Activated naive CD4-positive, alpha-beta T cell treated with anti-CD3 and anti-CD28 coated beads for 36 hours (primary cell): ENCODE measurements at regions of chr21 and their contacts with region 1.

Region 1: DNA sequence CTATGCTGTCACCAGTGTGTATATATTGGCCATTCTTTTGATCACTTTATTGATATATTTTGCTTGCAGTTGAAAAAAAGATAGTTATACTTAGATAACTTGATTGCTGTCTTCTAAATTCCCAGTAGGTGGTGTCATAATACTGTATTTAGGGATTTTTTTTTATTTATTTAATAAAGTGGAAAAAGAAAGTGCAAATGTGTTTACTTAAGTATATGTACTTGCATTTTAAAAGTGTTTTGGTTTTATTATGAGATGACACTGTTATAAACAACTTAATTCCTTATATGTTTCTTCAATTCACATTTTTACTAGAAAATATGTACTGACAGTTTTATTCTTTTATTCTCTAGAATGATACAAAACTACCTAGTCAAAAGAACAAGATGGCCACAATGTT is 164.8 kb downstream of the USP25 start:
- DNase-seq: no peak
- H3K4me3 Mint-ChIP-seq: no peak overlapping the region
- H3K27ac Mint-ChIP-seq: no peak overlapping the region
- H3K4me1 Mint-ChIP-seq: no peaks in the 10 kb centered on the region
- H3K27me3 Mint-ChIP-seq: peaks cover 2% of the 10 kb centered on the region

Region 2: DNA sequence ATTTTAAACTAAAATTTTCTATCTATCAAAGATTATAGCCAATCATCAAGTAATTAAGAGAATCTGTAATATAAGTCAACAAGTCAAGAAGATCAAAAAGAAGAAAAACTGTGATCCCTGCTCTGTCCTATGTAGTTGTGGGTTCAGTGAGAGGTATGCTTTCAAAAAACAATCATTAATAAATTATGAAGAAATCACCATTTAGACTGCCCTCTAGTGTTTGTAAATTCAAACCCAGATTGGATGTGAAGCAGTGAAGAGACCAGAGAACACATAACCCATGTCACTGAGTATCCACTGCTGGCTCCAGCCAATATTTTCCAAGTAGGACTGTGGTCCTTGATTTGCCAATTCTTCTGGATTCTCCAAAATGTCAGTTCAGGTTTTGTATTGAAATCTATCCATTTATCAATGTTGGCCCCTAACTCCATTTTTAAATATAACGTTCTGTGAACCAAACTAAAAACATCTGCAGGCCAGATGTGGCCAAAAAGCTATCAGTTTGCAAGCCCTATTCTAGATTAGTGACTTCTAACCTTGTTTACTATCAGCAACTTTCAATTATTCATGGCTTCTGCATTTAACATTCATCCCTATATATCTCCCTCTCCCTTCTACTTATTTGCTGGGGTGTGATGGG is 1150.7 kb after region 1 on chr21:
- CTCF ChIA-PET with region 1: no interaction called
- intact Hi-C with region 1: loop called (anchors 5 kb)
- DNase-seq: no peak
- H3K4me3 Mint-ChIP-seq: no peak overlapping the region
- H3K27ac Mint-ChIP-seq: no peak overlapping the region
- H3K4me1 Mint-ChIP-seq: no peaks in the 10 kb centered on the region
- H3K27me3 Mint-ChIP-seq: no peaks in the 10 kb centered on the region